Ovary (tissue), 10 donors: ENCODE measurements at regions of chr10 and their contacts with region 1.

Region 1: DNA sequence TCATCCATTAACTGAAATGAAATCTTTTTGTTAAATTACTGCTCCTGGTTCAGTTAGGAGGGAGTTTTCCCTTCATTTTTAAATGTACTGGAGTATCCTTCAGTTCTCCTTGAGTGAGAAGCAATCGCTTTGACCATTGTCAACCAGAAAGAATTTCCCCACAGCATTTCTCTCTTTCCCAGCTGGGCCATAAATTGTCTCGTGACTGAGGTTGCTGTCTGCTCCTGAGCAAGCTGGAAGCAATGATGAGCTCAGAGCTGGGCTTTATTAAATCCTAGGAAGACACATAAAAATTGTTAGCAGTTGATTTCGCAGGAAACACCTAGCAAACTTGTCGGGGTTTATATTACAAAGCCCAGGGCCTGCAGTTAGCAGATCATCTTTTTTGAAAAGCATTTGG is 102.0 kb upstream of the INSYN2A start:
- DNase-seq: no peak
- H3K4me3 ChIP-seq: no peak overlapping the region
- H3K27ac ChIP-seq: no peak overlapping the region
- H3K4me1 ChIP-seq: no peaks in the 10 kb centered on the region
- H3K27me3 ChIP-seq: no peaks in the 10 kb centered on the region
- CTCF ChIP-seq: no peak
- EP300 ChIP-seq: no peak
- POLR2A ChIP-seq: no peak

Region 2: DNA sequence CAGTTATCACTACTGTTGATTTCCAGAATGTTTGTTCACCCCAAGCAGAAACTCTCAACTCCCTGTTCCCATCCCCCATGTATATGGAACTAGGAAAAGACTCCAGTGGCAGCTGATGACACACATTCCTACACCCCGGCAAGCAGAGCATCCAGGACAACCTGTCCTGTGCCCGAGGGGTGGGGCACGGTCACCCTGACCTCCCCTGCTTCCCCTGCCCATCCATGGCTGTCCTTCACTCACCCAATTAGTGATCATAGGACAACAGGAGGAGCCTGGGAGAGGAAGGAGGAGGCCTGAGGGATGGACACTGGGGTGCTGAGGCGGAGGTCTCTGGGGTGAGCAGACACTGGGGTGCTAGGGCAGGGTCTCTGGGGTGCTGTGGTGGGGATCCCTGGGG is 30.7 kb after region 1 on chr10:
- intact Hi-C with region 1: loop called in 1 of 4 experiments (anchors 2 kb)
- DNase-seq: no peak
- H3K4me3 ChIP-seq: no peak overlapping the region
- H3K27ac ChIP-seq: no peak overlapping the region
- H3K4me1 ChIP-seq: no peaks in the 10 kb centered on the region
- H3K27me3 ChIP-seq: no peaks in the 10 kb centered on the region
- CTCF ChIP-seq: no peak
- EP300 ChIP-seq: no peak
- POLR2A ChIP-seq: no peak